Activated naive CD8-positive, alpha-beta T cell treated with anti-CD3 and anti-CD28 coated beads, Interleukin-2, amount 10 ng/mL, durations not matched to agents 7 days and 5 days (primary cell): ENCODE measurements at regions of chr6 and their contacts with region 1.

Region 1: DNA sequence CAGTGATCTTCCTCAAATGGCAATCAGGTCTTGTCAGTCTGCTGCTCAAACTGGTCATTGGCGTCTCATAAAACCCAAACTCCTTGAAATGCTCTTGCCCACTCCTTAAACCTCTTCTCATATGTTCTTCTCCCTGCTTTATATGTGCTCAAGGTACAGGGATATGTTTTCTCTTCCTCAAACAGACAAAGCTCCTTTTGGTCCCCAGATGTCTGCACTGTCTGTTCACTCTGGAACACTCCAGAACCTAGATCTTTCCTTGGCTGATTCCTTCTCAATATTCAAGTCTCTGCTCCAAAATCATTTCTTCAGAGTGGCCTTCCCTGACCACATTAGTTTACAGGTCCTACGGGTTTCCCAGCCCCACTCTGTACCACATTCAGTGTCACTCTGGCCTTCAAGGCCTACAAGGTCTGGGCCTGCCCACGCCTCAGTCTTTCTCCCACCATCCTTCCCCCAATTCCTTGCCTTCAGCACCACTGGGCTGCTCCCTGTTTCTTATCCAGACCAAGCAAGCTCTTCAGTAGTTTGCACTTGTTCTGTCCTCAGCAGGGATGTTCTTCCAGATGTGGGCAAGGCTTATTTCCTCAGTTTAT is 9.0 kb downstream of the THEMIS start:
- DNase-seq: no peak
- ATAC-seq: peak; percentile 32
- H3K4me3 Mint-ChIP-seq: peak overlapping the region; percentile 52
- H3K27ac Mint-ChIP-seq: peak overlapping the region; percentile 38
- H3K4me1 Mint-ChIP-seq: peaks cover 47% of the 10 kb centered on the region
- H3K27me3 Mint-ChIP-seq: no peaks in the 10 kb centered on the region

Region 2: GRCh38 chr6:127855542-127856159 is 36.2 kb before region 1 on chr6:
- POLR2A ChIA-PET with region 1: no interaction called
- DNase-seq: no peak
- ATAC-seq: no peak
- H3K4me3 Mint-ChIP-seq: peak overlapping the region; percentile 35
- H3K27ac Mint-ChIP-seq: peak overlapping the region; percentile 40
- H3K4me1 Mint-ChIP-seq: peaks cover 56% of the 10 kb centered on the region
- H3K27me3 Mint-ChIP-seq: no peaks in the 10 kb centered on the region

Region 3: GRCh38 chr6:127868338-127868737 is 23.5 kb before region 1 on chr6:
- POLR2A ChIA-PET with region 1: no interaction called
- DNase-seq: no peak
- ATAC-seq: no peak
- H3K4me3 Mint-ChIP-seq: no peak overlapping the region
- H3K27ac Mint-ChIP-seq: no peak overlapping the region
- H3K4me1 Mint-ChIP-seq: peaks cover 53% of the 10 kb centered on the region
- H3K27me3 Mint-ChIP-seq: no peaks in the 10 kb centered on the region

Region 4: GRCh38 chr6:127879685-127880084 is 12.1 kb before region 1 on chr6:
- POLR2A ChIA-PET with region 1: interaction called, 10 read pairs
- DNase-seq: peak; percentile 55
- ATAC-seq: peak; percentile 71
- H3K4me3 Mint-ChIP-seq: peak overlapping the region; percentile 75
- H3K27ac Mint-ChIP-seq: peak overlapping the region; percentile 86
- H3K4me1 Mint-ChIP-seq: peaks cover 72% of the 10 kb centered on the region
- H3K27me3 Mint-ChIP-seq: no peaks in the 10 kb centered on the region